Stomach (tissue), 19 donors: ENCODE measurements at regions of chr3 and their contacts with region 1.

Region 1: DNA sequence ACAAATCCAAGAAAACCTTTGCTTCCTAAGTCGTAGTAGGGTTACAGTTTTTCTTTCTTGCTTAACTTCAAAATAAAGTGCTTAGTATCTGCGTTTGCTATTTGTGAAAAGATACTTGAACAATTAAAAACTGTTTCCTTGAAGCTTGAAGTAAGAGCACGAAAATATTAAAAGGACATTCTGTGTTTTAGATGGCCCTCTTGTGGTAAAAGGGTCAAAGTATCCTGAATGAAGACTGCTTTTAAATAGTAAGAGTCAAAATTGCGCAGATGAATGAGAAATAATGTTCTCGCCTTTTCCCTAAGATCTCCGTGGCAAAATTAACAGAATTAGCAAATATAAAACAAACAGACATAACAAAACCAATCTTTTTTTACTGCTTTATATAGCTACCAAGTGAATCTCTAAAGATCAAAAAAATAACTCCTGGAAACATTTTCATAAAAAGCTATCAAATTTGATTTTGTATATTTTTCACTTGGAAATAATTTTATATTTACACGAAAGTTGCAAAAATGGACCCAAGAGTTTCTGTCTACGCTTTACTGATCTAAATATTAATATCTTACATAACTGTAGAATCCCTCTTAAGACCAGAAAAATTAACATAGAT is 175.4 kb downstream of the MBNL1 start:
- DNase-seq: peak in 1 of 2 donors; percentile 77
- H3K4me3 ChIP-seq: no peak overlapping the region
- H3K27ac ChIP-seq: peak overlapping the region in 3 of 5 donors; percentile 10 to 44 (median 31)
- H3K4me1 ChIP-seq: peaks cover 3 to 82% (median 43%) of the 10 kb centered on the region in 4 donors
- H3K27me3 ChIP-seq: no peaks in the 10 kb centered on the region
- CTCF ChIP-seq: peak in 5 of 7 experiments; percentile 60 to 74 (median 63)
- EP300 ChIP-seq: no peak
- POLR2A ChIP-seq: no peak

Region 2: DNA sequence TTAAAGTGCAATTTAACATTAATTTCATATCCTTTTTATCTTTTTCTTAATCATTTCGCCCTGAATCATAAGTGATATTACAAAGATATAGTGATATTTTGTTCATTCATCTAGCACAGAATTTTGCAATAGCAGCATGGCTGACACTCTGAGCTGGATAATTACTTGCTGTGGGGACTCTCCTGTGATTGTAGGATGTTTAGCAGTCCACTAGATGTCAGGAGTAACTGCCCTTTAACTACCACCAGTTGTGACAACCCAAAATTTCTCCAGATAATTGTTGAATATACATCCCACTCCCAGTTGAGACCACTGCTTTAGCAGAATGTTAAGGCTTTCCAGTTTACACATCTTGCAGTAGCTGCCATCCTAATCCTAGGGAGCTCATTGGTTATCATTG is 372.2 kb before region 1 on chr3:
- intact Hi-C with region 1: loop called (anchors 10 kb)
- DNase-seq: peak in 1 of 2 donors; percentile 40
- H3K4me3 ChIP-seq: no peak overlapping the region
- H3K27ac ChIP-seq: no peak overlapping the region
- H3K4me1 ChIP-seq: peaks cover 0 to 8% (median 3%) of the 10 kb centered on the region in 4 donors
- H3K27me3 ChIP-seq: no peaks in the 10 kb centered on the region
- CTCF ChIP-seq: peak in 4 of 7 experiments; percentile 10 to 30 (median 19)
- EP300 ChIP-seq: no peak
- POLR2A ChIP-seq: no peak

Region 3: DNA sequence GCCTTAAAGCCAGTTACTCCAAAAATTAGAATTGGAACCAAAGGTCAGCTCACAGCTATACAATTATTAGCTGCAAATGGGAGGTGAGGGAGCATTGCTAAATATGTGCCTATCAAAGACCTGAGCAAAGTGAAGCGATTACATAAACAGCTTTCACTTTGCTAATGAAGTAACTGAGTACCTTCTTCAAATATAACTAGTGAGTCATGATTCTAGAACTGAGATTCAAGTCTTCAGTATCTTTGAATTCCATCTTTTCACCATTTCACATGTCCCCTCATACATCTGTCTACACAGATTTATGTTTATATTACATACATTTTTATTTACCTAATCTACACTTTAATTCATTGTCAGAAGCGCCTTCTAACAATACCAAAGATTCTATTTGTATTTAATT is 513.4 kb after region 1 on chr3:
- intact Hi-C with region 1: no loop called
- DNase-seq: no peak
- H3K4me3 ChIP-seq: no peak overlapping the region
- H3K27ac ChIP-seq: no peak overlapping the region
- H3K4me1 ChIP-seq: peaks cover 0 to 11% (median 0%) of the 10 kb centered on the region in 4 donors
- H3K27me3 ChIP-seq: no peaks in the 10 kb centered on the region
- CTCF ChIP-seq: no peak
- EP300 ChIP-seq: no peak
- POLR2A ChIP-seq: no peak